CD4-positive, alpha-beta memory T cell (primary cell): ENCODE measurements at regions of chr1 and their contacts with region 1.

Region 1: GRCh38 chr1:38018864-38019343 is 6.4 kb downstream of the UTP11 start:
- DNase-seq: peak in 1 of 5 donors; percentile 33
- H3K4me3 ChIP-seq: no peak overlapping the region
- H3K4me3 Mint-ChIP-seq: no peak overlapping the region
- H3K27ac ChIP-seq: no peak overlapping the region
- H3K27ac Mint-ChIP-seq: no peak overlapping the region
- H3K4me1 ChIP-seq: peaks cover 9% of the 10 kb centered on the region
- H3K4me1 Mint-ChIP-seq: peaks cover 6 to 11% (median 10%) of the 10 kb centered on the region in 4 donors
- H3K27me3 ChIP-seq: no peaks in the 10 kb centered on the region
- H3K27me3 Mint-ChIP-seq: no peaks in the 10 kb centered on the region

Region 2: DNA sequence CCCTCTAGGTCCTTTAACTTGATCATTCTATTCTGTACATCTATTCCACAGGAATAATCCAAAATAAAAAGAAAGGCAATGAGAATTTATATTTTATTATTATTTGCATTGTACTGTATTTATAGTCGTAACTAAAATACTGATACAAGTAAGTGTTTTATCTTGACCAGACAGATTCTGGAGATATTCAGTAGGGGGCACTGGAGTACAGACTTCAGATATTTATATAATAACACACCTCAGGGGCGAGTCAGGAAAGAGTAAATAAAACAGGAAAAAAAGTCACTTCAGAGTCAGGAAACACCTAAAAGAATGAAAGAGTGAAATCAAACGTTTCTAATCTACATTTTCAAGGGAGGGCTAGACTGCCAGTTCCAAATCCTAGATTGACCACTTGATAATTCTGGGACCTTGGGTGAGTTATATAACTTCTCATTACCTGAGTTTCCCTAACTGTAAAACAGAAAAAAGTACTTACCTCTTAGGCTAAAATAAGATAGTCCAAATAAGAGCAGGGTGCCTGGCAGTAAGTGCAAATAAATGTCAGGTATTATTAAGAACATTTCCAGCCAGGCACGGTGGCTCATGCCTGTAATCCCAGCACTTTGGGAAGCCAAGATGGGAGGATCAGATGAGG is 128.4 kb before region 1 on chr1:
- CTCF ChIA-PET with region 1: interaction called, 19 read pairs
- POLR2A ChIA-PET with region 1: no interaction called
- intact Hi-C with region 1: no loop called
- DNase-seq: peak in 4 of 5 donors; percentile 30 to 39 (median 36)
- H3K4me3 ChIP-seq: no peak overlapping the region
- H3K4me3 Mint-ChIP-seq: no peak overlapping the region
- H3K27ac ChIP-seq: no peak overlapping the region
- H3K27ac Mint-ChIP-seq: peak overlapping the region in 6 of 7 donors; percentile 4 to 66 (median 42)
- H3K4me1 ChIP-seq: no peaks in the 10 kb centered on the region
- H3K4me1 Mint-ChIP-seq: peaks cover 2 to 5% (median 4%) of the 10 kb centered on the region in 4 donors
- H3K27me3 ChIP-seq: no peaks in the 10 kb centered on the region
- H3K27me3 Mint-ChIP-seq: no peaks in the 10 kb centered on the region

Region 3: DNA sequence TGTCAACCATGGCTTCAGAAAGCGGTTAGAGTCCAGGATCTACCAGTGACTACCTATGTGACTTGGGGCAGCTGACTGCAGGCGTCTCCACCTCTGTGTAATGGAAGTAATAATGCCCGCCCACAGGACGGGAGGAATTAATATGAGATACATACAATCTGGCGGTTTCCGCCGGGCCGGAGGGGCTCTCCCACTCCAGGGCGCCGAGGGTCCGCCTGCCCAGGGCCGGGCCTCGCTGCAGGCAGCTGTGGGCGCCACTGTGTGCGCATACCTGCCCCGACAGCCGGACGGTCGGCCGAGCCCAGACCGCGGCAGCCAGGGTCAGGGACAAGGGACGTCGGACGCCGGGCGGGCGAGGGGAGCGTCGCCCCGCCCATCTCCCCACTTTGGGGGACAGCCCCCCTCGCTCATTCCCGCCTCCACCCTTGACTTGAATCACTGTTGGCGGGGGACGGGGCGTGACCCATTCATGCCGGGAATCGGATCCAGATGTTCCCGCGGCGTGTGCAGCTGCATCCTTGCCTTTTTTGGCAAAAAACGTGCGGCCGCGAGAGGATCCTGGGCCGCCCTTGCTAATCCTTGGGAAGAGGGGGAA is 23.1 kb before region 1 on chr1:
- CTCF ChIA-PET with region 1: interaction called, 192 read pairs
- POLR2A ChIA-PET with region 1: interaction called, 4 read pairs
- intact Hi-C with region 1: no loop called
- DNase-seq: no peak
- H3K4me3 ChIP-seq: no peak overlapping the region
- H3K4me3 Mint-ChIP-seq: peak overlapping the region in 7 of 8 donors; percentile 64 to 86 (median 79)
- H3K27ac ChIP-seq: peak overlapping the region; percentile 44
- H3K27ac Mint-ChIP-seq: peak overlapping the region in 4 of 7 donors; percentile 22 to 95 (median 64)
- H3K4me1 ChIP-seq: peaks cover 9% of the 10 kb centered on the region
- H3K4me1 Mint-ChIP-seq: peaks cover 8 to 30% (median 14%) of the 10 kb centered on the region in 4 donors
- H3K27me3 ChIP-seq: no peaks in the 10 kb centered on the region
- H3K27me3 Mint-ChIP-seq: no peaks in the 10 kb centered on the region

Region 4: GRCh38 chr1:38138498-38139233 is 119.8 kb after region 1 on chr1:
- CTCF ChIA-PET with region 1: no interaction called
- POLR2A ChIA-PET with region 1: no interaction called
- intact Hi-C with region 1: no loop called
- DNase-seq: no peak
- H3K4me3 ChIP-seq: no peak overlapping the region
- H3K4me3 Mint-ChIP-seq: no peak overlapping the region
- H3K27ac ChIP-seq: no peak overlapping the region
- H3K27ac Mint-ChIP-seq: no peak overlapping the region
- H3K4me1 ChIP-seq: no peaks in the 10 kb centered on the region
- H3K4me1 Mint-ChIP-seq: no peaks in the 10 kb centered on the region
- H3K27me3 ChIP-seq: peaks cover 35% of the 10 kb centered on the region
- H3K27me3 Mint-ChIP-seq: peaks cover 56 to 65% of the 10 kb centered on the region in 2 donors

Region 5: GRCh38 chr1:38308780-38309179 is 289.9 kb after region 1 on chr1:
- CTCF ChIA-PET with region 1: no interaction called
- POLR2A ChIA-PET with region 1: no interaction called
- intact Hi-C with region 1: no loop called
- DNase-seq: no peak
- H3K4me3 ChIP-seq: no peak overlapping the region
- H3K4me3 Mint-ChIP-seq: no peak overlapping the region
- H3K27ac ChIP-seq: no peak overlapping the region
- H3K27ac Mint-ChIP-seq: no peak overlapping the region
- H3K4me1 ChIP-seq: no peaks in the 10 kb centered on the region
- H3K4me1 Mint-ChIP-seq: no peaks in the 10 kb centered on the region
- H3K27me3 ChIP-seq: no peaks in the 10 kb centered on the region
- H3K27me3 Mint-ChIP-seq: peaks cover 19 to 25% of the 10 kb centered on the region in 2 donors